ENCODE measurements at regions of chr5 and their contacts with region 1.

Region 1: DNA sequence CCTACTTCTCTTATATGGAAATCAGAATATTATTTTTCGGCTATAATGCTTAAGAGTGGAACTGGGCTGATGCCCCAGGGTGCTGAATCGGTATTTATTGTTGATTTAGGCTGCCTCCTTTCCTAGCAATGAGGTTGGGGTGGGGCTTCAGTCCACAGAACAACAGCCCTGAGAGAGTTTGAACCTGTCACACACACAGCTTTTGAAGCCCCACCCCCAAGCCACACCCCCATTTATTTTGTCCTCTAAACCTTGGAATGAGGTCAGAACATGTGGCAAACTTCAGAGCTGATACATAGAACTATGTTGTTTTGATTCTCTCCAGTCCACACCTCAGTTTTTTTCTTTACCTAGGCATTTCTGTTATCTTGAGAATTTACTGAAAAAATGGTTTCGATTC is 51.7 kb upstream of the CAMK4 start:
- DNase-seq: no peak
- H3K4me3 ChIP-seq: no peak overlapping the region
- H3K27ac ChIP-seq: no peak overlapping the region
- H3K4me1 ChIP-seq: no peaks in the 10 kb centered on the region
- H3K27me3 ChIP-seq: no peaks in the 10 kb centered on the region
- CTCF ChIP-seq: no peak
- EP300 ChIP-seq: no peak
- POLR2A ChIP-seq: no peak

Region 2: DNA sequence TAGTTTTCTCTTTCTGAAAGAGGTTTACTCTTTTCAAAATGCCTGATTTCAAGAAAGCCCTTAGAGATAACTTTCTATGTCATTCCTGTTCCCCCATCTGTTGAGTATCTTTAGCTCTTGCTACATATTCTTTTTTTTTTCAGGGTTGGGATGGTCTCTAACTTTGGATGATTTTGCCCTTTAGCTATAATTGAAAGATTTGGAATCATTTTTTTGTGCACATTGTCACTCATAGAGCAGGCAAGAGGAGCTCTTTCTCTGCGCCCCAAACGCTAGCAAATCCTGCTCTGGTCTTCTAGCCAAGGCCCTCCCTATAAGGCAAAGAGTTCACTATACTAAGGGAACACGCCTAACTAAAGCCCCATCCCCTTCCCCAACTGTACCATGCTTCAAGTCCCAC is 762.9 kb before region 1 on chr5:
- intact Hi-C with region 1: loop called in 1 of 4 experiments (anchors 5 kb)
- DNase-seq: no peak
- H3K4me3 ChIP-seq: no peak overlapping the region
- H3K27ac ChIP-seq: no peak overlapping the region
- H3K4me1 ChIP-seq: no peaks in the 10 kb centered on the region
- H3K27me3 ChIP-seq: no peaks in the 10 kb centered on the region
- CTCF ChIP-seq: no peak
- EP300 ChIP-seq: no peak
- POLR2A ChIP-seq: no peak

Region 3: GRCh38 chr5:111004286-111004685 is 168.2 kb before region 1 on chr5:
- intact Hi-C with region 1: no loop called
- DNase-seq: no peak
- H3K4me3 ChIP-seq: no peak overlapping the region
- H3K27ac ChIP-seq: no peak overlapping the region
- H3K4me1 ChIP-seq: no peaks in the 10 kb centered on the region
- H3K27me3 ChIP-seq: no peaks in the 10 kb centered on the region
- CTCF ChIP-seq: no peak
- EP300 ChIP-seq: no peak
- POLR2A ChIP-seq: no peak

Region 4: GRCh38 chr5:111735583-111736270 is 563.2 kb after region 1 on chr5:
- intact Hi-C with region 1: no loop called
- DNase-seq: peak in 3 of 5 donors; percentile 25 to 68 (median 35)
- H3K4me3 ChIP-seq: no peak overlapping the region
- H3K27ac ChIP-seq: no peak overlapping the region
- H3K4me1 ChIP-seq: peaks cover 4% of the 10 kb centered on the region
- H3K27me3 ChIP-seq: no peaks in the 10 kb centered on the region
- CTCF ChIP-seq: no peak
- EP300 ChIP-seq: no peak
- POLR2A ChIP-seq: no peak